Activated naive CD4-positive, alpha-beta T cell treated with anti-CD3 and anti-CD28 coated beads for 36 hours (primary cell): ENCODE measurements at regions of chr4 and their contacts with region 1.

Region 1: DNA sequence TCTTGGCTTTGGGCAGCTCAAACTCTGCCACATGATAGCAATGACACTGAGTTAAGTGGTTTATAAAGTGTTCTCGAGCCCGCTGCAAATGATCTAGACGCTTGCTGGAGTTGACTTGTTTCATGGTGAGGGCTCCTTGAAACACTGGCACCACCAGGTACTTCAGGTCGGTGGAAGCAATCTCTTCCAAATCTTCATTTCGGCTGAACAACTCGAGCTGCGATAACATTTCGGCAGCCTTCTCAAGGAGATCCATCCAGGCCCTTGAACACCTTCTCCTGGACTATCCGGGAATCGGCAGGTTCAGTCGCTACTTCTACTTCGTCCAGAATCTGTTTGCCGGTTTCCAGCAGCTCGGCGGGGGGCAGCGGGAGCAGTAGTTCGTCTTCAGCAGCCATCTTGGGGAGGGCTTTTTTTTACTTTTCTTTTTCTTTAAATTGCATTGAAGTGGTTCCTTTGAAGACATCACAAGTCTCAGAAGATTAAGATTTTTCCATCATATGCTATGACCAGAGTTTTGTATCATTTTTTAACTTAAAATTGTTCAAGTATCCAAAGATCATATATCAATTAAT is 28.0 kb downstream of the HNRNPDL start:
- DNase-seq: no peak
- H3K4me3 Mint-ChIP-seq: no peak overlapping the region
- H3K27ac Mint-ChIP-seq: no peak overlapping the region
- H3K4me1 Mint-ChIP-seq: no peaks in the 10 kb centered on the region
- H3K27me3 Mint-ChIP-seq: no peaks in the 10 kb centered on the region

Region 2: DNA sequence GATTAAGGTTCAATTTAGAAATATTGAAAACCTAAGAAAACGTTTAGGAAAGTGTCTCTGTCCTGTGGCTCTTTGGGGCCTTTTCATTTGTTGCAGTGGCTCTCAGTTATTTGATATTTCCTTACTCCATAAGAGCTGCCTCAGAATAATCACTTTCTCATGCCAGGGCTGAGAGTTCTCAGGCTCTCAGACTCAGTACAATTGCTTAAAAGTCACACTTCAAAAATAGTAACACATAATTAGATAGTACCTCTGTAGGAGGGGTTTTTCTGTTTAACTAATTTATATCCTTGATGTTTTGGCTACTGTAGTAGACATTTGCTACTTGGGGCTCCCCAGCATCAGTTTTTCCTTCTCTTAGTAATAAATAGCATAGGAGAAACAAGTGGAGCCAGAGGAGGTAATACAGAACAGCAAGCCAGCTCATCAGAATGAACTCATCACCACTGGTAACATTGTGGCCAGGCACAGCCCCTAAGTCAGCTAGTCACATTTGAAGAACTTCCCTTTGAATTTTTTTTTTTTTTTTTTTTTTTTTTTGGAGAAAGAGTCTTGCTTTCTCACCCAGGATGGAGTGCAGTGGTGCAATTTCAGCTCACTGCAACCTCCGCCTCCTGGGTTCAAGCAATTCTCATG is 20.5 kb before region 1 on chr4:
- CTCF ChIA-PET with region 1: no interaction called
- intact Hi-C with region 1: loop called (anchors 1 kb)
- DNase-seq: peak; percentile 15
- H3K4me3 Mint-ChIP-seq: no peak overlapping the region
- H3K27ac Mint-ChIP-seq: no peak overlapping the region
- H3K4me1 Mint-ChIP-seq: peaks cover 8% of the 10 kb centered on the region
- H3K27me3 Mint-ChIP-seq: no peaks in the 10 kb centered on the region